PC-3 (cell line): ENCODE measurements at regions of chr3 and their contacts with region 1.

Region 1: GRCh38 chr3:110420158-110420641 is 651.4 kb upstream of the NECTIN3 start:
- DNase-seq: peak; percentile 94
- ATAC-seq: peak; percentile 93
- H3K4me3 ChIP-seq: peak overlapping the region; percentile 58
- H3K27ac ChIP-seq: peak overlapping the region; percentile 74
- H3K4me1 ChIP-seq: peaks cover 31% of the 10 kb centered on the region
- H3K27me3 ChIP-seq: no peaks in the 10 kb centered on the region
- CTCF ChIP-seq: no peak

Region 2: DNA sequence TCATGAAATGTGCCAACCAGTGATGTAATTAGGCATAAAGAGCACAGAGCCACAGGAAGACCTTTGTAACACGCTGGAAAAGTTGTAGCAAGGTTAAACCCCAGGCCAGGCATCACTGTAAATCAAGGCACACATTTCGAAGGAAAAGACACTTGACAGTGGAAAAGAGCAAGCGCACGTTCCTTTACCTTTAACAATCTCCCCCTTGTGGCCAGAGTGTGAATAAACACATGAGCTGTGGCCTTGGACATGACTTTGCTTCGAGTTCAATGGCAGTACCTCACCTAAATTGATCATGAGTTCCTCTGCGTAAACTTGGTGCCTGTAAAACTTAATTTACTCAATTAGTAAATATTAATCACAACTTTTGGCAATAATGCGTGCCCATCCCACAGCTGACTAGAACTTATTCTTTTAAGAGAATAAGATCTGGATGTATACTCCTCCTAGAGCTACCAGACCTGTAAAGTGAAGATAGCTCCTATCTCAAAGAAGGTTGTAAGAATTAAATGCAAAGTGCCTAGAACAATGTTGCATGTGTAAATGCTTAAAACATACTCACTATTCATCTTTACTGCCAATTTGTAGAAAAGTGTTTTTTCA is 105.6 kb before region 1 on chr3:
- CTCF ChIA-PET with region 1: no interaction called
- POLR2A ChIA-PET with region 1: no interaction called
- intact Hi-C with region 1: loop called (anchors 2 kb)
- DNase-seq: peak; percentile 88
- ATAC-seq: peak; percentile 80
- H3K4me3 ChIP-seq: no peak overlapping the region
- H3K27ac ChIP-seq: no peak overlapping the region
- H3K4me1 ChIP-seq: peaks cover 10% of the 10 kb centered on the region
- H3K27me3 ChIP-seq: no peaks in the 10 kb centered on the region
- CTCF ChIP-seq: peak; percentile 90

Region 3: DNA sequence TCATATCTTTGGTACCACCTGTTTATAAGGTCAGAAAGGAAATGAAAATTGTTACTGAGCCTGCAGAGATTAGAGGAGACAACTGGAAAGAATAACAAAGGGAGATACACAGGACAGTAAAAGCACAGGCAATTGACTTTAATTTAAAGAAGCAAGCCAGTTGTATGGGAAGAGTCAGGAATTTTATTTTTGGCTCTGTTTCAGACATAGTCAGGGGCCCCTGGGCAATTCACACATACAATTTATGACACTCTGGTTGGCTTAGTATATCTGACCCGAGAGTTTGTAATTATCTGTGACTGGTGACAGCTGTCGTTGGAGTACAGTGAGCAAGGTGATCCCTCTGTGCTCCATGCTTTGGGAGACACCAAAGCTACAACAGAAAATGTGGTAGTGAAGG is 59.5 kb after region 1 on chr3:
- CTCF ChIA-PET with region 1: no interaction called
- POLR2A ChIA-PET with region 1: interaction called, 3 read pairs
- intact Hi-C with region 1: loop called (anchors 1 kb)
- DNase-seq: no peak
- ATAC-seq: no peak
- H3K4me3 ChIP-seq: no peak overlapping the region
- H3K27ac ChIP-seq: no peak overlapping the region
- H3K4me1 ChIP-seq: peaks cover 28% of the 10 kb centered on the region
- H3K27me3 ChIP-seq: no peaks in the 10 kb centered on the region
- CTCF ChIP-seq: no peak

Region 4: DNA sequence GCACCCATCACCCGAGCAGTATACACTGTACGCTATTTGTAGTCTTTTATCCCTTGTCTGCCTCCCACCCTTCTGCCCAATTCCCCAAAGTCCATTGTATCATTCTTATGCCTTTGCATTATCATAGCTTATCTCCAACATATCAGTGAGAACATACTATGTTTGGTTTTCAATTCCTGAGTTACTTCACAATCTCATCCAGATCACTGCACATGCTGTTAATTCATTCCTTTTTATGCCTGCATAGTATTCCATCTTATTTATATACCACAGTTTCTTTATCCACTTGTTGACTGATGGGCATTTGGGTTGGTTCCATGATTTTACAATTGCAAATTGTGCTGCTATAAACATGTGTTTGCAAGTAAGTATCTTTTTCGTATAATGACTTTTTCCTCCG is 86.7 kb after region 1 on chr3:
- CTCF ChIA-PET with region 1: no interaction called
- POLR2A ChIA-PET with region 1: no interaction called
- intact Hi-C with region 1: loop called (anchors 1 kb)
- DNase-seq: no peak
- ATAC-seq: no peak
- H3K4me3 ChIP-seq: no peak overlapping the region
- H3K27ac ChIP-seq: no peak overlapping the region
- H3K4me1 ChIP-seq: no peaks in the 10 kb centered on the region
- H3K27me3 ChIP-seq: no peaks in the 10 kb centered on the region
- CTCF ChIP-seq: no peak

Region 5: GRCh38 chr3:110526777-110527727 is 106.9 kb after region 1 on chr3:
- CTCF ChIA-PET with region 1: no interaction called
- POLR2A ChIA-PET with region 1: no interaction called
- intact Hi-C with region 1: loop called (anchors 2 kb)
- DNase-seq: peak; percentile 92
- ATAC-seq: peak; percentile 96
- H3K4me3 ChIP-seq: peak overlapping the region; percentile 18; the same call in 1 of the 2 replicates
- H3K27ac ChIP-seq: peak overlapping the region; percentile 36
- H3K4me1 ChIP-seq: peaks cover 26% of the 10 kb centered on the region
- H3K27me3 ChIP-seq: no peaks in the 10 kb centered on the region
- CTCF ChIP-seq: no peak

Region 6: DNA sequence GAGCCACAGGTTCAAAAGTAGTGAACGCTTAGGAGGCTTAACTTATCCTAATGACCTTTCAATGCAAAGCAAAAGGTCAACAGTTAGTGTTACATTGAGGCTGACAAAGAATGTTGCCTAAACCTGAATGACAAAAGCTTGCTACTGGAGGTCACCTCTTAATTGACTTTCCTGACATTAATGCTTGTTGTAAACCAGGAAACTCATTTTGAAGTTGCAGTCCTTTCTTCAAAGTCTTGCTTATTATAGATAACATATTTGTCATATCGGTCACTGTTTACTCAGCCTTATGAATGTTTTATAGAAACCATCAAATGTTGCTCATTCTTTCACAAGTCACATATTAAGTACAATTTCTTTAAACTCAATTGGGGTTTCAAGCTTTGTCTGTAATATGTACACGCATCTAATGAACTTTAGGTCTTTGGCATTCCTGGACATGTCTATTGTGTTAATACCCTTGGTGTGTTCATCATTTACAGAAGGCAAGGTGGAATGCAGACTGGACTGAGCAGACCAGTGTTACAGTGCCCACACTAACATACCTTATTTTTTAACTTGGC is 163.3 kb after region 1 on chr3:
- CTCF ChIA-PET with region 1: no interaction called
- POLR2A ChIA-PET with region 1: no interaction called
- intact Hi-C with region 1: loop called (anchors 1 kb)
- DNase-seq: peak; percentile 72
- ATAC-seq: peak; percentile 80
- H3K4me3 ChIP-seq: peak overlapping the region; percentile 13; the same call in 1 of the 2 replicates
- H3K27ac ChIP-seq: peak overlapping the region; percentile 37
- H3K4me1 ChIP-seq: peaks cover 25% of the 10 kb centered on the region
- H3K27me3 ChIP-seq: no peaks in the 10 kb centered on the region
- CTCF ChIP-seq: no peak

Region 7: DNA sequence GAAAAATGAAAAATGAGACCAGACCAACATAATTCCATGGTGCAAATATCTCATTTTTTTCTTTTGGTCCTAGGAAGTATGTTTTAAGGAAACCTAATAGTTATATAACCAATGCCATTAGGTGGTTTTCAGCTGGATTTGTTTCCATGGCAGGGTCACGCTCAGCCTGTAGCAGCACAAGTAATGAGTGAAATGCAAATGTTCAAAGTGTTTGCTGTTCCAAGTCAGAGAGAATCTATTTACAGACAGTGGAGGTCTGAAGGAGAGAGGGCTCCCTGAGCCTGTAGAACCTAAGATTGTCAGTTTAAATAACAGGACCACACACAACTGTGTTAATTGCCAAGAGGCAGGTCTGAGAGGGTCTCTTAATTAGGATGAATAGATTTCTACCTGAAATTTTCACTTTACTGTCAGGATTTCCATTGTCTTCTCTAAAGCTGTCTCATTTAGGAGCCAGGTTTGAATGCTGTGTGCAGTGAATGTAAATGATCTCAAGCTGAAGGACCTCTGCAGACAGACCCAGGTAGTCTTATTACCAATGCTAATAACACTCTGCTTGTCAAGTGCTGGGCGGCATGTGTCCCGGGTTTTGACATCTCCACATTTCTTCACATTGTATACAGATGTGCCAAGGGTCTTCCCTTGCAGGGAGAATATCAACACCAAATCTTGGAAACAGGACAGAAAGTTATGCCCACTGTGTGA is 334.2 kb after region 1 on chr3:
- CTCF ChIA-PET with region 1: no interaction called
- POLR2A ChIA-PET with region 1: no interaction called
- intact Hi-C with region 1: no loop called
- DNase-seq: no peak
- ATAC-seq: no peak
- H3K4me3 ChIP-seq: no peak overlapping the region
- H3K27ac ChIP-seq: no peak overlapping the region
- H3K4me1 ChIP-seq: no peaks in the 10 kb centered on the region; the same call in 1 of the 2 replicates
- H3K27me3 ChIP-seq: no peaks in the 10 kb centered on the region
- CTCF ChIP-seq: no peak

Region 8: DNA sequence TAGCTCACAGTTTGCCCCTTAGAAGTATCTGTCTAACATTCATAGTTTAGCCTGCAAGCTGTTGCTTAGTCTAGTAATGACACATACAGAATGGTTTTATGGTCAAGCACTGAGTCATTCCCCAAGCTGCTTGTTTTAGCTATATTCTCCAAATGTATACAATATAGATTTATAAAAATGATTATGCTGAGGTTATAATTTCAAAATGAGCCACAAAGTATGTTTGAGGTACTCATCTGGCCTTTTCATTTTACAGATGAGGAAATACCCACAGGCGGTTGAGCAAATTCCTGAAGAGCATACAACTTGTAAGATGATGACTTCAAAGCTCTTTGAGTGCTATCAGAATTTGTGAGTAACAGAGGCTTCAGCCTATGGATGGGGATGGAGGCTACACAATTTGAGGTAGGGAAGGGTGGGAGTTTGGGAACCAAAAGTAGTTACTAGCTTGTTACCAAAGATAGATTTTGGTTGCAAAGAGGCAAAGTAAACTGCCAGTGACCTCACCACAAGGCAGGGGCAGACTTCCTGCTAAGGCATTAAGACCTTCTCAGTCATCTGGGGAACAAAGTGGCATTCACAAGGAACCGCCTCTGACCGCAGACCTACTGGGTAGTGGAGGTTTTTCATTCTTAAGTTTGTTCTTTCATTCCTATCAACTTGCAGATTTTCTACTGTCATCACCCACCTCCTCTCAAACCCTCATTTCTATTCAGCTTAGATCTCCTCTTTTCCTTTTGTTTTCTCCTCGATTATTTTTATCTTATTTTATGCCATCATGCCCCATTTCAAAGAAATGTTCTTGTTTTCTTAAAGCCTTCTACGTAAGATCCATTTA is 394.2 kb after region 1 on chr3:
- CTCF ChIA-PET with region 1: no interaction called
- POLR2A ChIA-PET with region 1: no interaction called
- intact Hi-C with region 1: loop called (anchors 5 kb)
- DNase-seq: peak; percentile 92
- ATAC-seq: peak; percentile 93
- H3K4me3 ChIP-seq: peak overlapping the region; percentile 4; the same call in 1 of the 2 replicates
- H3K27ac ChIP-seq: peak overlapping the region; percentile 94
- H3K4me1 ChIP-seq: peaks cover 53% of the 10 kb centered on the region
- H3K27me3 ChIP-seq: no peaks in the 10 kb centered on the region
- CTCF ChIP-seq: no peak